BJ (cell line): ENCODE measurements at regions of chr16 and their contacts with region 1.

Region 1: GRCh38 chr16:68590201-68590994 is 51.3 kb downstream of the ZFP90 start:
- DNase-seq: no peak
- H3K4me3 ChIP-seq: no peak overlapping the region
- H3K27me3 ChIP-seq: no peaks in the 10 kb centered on the region
- CTCF ChIP-seq: peak; percentile 95

Region 2: GRCh38 chr16:68506331-68507053 is 83.9 kb before region 1 on chr16:
- CTCF ChIA-PET with region 1: no interaction called
- POLR2A ChIA-PET with region 1: no interaction called
- DNase-seq: no peak
- H3K4me3 ChIP-seq: no peak overlapping the region
- H3K27me3 ChIP-seq: no peaks in the 10 kb centered on the region
- CTCF ChIP-seq: no peak

Region 3: DNA sequence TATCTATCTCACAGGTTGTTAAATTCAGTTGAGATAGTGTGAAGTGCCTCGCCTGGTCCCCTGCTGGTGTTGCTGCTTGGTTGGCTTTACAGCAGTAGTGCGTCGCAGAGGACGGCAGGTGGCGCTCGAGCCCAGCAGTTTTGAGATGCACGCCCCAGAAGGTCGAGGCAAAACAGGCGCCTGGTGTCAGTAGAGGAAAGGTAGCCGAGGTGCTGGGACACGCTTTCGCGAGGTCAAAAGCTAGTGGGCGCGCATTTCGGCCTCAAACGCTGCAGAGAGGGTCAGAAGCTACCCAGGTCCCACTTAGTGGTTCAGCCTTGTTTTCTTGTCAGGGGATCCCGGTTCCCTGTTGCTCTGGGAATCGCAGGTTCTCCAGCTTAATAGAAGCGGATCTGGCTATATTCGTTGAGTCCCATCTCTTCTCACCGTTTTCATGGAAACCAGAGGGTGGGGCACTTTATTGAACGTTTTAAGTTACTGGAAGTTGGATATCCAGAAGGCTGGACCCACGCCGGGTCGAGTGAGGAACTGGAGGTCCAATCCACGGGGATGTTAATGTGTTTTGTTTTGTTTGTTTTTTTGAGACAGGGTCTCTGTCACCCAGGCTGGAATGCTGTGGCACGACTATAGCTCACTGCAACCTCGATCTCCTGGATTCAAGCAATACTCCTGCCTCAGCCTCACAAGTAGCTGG is 61.6 kb before region 1 on chr16:
- CTCF ChIA-PET with region 1: interaction called, 10 read pairs
- POLR2A ChIA-PET with region 1: no interaction called
- DNase-seq: no peak
- H3K4me3 ChIP-seq: peak overlapping the region; percentile 19; the same call in 1 of the 2 replicates
- H3K27me3 ChIP-seq: no peaks in the 10 kb centered on the region
- CTCF ChIP-seq: peak; percentile 97

Region 4: GRCh38 chr16:68605746-68606145 is 15.3 kb after region 1 on chr16:
- CTCF ChIA-PET with region 1: interaction called, 16 read pairs
- POLR2A ChIA-PET with region 1: no interaction called
- DNase-seq: no peak
- H3K4me3 ChIP-seq: no peak overlapping the region
- H3K27me3 ChIP-seq: no peaks in the 10 kb centered on the region
- CTCF ChIP-seq: no peak

Region 5: GRCh38 chr16:68800257-68800875 is 210.0 kb after region 1 on chr16:
- CTCF ChIA-PET with region 1: interaction called, 43 read pairs
- POLR2A ChIA-PET with region 1: no interaction called
- DNase-seq: peak; percentile 76
- H3K4me3 ChIP-seq: no peak overlapping the region
- H3K27me3 ChIP-seq: 0 out of 2 replicates have a peak, but pooled peaks cover 1% of the 10 kb centered on the region
- CTCF ChIP-seq: peak; percentile 89

Region 6: GRCh38 chr16:68843482-68844210 is 253.2 kb after region 1 on chr16 and contains the start of gene TANGO6:
- CTCF ChIA-PET with region 1: interaction called, 24 read pairs
- POLR2A ChIA-PET with region 1: no interaction called
- DNase-seq: peak; percentile 11
- H3K4me3 ChIP-seq: peak within 1 kb of the TSS; percentile 65
- H3K27me3 ChIP-seq: no peaks in the 10 kb centered on the region
- CTCF ChIP-seq: peak; percentile 47
- polyA plus RNA-seq, gene TANGO6: 13.0 and 14.6 TPM in 2 replicates

Region 7: DNA sequence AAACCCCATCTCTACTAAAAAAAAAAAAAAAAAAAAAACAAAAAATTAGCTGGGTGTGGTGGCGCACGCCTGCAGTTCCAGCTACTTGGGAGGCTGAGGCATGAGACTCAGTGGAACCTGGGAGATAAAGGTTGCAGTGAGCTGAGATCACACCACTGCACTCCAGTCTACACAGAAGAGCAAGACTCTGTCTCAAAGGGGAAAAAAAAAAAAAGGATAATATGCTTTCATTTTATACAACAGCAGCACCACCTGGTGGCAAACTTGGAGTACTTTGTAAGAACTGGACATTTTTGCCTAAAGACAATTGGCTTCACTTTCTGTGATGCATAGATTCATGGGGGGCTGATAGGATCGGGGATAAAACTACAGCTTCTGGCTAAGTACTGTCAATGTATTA is 533.5 kb after region 1 on chr16:
- CTCF ChIA-PET with region 1: interaction called, 25 read pairs
- POLR2A ChIA-PET with region 1: no interaction called
- DNase-seq: no peak
- H3K4me3 ChIP-seq: no peak overlapping the region
- H3K27me3 ChIP-seq: no peaks in the 10 kb centered on the region
- CTCF ChIP-seq: peak; percentile 56